Naive thymus-derived CD4-positive, alpha-beta T cell (primary cell): ENCODE measurements at regions of chr3 and their contacts with region 1.

Region 1: GRCh38 chr3:17023006-17023664 is 138.4 kb downstream of the PLCL2 start:
- DNase-seq: peak in 4 of 9 donors; percentile 5 to 61 (median 34)
- ATAC-seq: peak; percentile 87
- H3K4me3 ChIP-seq: no peak overlapping the region
- H3K4me3 Mint-ChIP-seq: peak overlapping the region in 7 of 10 donors; percentile 27 to 72 (median 49)
- H3K27ac ChIP-seq: no peak overlapping the region
- H3K27ac Mint-ChIP-seq: peak overlapping the region; percentile 34 to 95 (median 79)
- H3K4me1 ChIP-seq: peaks cover 15 to 31% of the 10 kb centered on the region in 2 donors
- H3K4me1 Mint-ChIP-seq: peaks cover 34 to 87% (median 76%) of the 10 kb centered on the region in 7 donors
- H3K27me3 ChIP-seq: no peaks in the 10 kb centered on the region
- H3K27me3 Mint-ChIP-seq: no peaks in the 10 kb centered on the region

Region 2: DNA sequence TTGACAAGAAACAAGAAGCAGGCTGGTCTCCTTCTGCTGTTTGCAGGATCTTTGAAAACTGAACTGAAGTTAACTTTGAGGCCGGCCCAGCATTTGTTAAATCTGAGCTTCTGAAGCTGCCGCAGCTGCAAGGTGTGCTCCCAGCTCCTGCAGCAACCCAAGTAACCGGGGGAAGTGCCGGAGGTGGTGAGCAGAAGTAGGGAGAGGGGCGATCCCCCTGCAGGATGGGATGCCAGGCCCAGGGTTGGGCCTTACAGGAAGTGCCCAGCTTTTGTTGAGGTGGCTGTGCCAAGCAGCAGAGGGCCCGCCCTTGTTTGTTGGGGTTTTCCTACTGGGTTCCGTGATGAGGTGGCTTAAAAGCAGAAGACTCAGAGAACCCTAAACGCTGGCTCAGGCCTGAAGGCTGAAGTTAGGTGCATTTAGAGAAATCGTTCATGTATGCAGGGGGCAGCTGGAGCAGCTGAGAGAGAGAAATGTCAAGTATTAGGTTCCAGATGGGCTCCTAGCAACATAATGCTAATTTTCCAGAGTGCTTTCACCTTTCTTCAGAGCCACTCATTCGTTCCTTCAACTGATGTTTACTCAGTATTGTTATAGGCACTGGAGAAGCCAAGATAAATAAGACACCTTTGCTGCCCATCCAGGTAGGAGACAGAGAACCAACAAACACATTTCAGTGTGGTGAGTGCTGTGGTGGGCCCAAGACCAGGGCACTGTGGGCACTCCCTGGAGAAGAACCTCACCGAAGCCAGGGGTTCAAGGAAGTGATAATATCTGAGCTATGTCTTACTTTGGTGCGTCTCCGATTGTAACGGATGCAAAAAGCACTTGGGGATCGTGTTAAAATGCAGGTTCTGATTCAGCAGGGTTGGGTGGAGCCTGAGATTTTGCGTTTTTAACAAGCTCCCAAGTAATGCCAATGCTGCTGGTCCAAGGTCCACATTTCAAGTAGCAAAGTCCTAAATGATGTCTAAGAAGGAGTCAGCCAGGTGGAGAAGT is 180.6 kb before region 1 on chr3:
- CTCF ChIA-PET with region 1: no interaction called
- POLR2A ChIA-PET with region 1: no interaction called
- intact Hi-C with region 1: loop called in 1 of 2 experiments (anchors 5 kb)
- DNase-seq: peak; percentile 49 to 85 (median 78)
- ATAC-seq: peak; percentile 95
- H3K4me3 ChIP-seq: peak overlapping the region; percentile 61
- H3K4me3 Mint-ChIP-seq: peak overlapping the region; percentile 78 to 93 (median 87)
- H3K27ac ChIP-seq: peak overlapping the region; percentile 76
- H3K27ac Mint-ChIP-seq: peak overlapping the region; percentile 92 to 99 (median 98)
- H3K4me1 ChIP-seq: peaks cover 49 to 51% of the 10 kb centered on the region in 2 donors
- H3K4me1 Mint-ChIP-seq: peaks cover 34 to 96% (median 90%) of the 10 kb centered on the region in 7 donors
- H3K27me3 ChIP-seq: no peaks in the 10 kb centered on the region
- H3K27me3 Mint-ChIP-seq: peaks cover 0 to 6% (median 0%) of the 10 kb centered on the region in 5 donors

Region 3: DNA sequence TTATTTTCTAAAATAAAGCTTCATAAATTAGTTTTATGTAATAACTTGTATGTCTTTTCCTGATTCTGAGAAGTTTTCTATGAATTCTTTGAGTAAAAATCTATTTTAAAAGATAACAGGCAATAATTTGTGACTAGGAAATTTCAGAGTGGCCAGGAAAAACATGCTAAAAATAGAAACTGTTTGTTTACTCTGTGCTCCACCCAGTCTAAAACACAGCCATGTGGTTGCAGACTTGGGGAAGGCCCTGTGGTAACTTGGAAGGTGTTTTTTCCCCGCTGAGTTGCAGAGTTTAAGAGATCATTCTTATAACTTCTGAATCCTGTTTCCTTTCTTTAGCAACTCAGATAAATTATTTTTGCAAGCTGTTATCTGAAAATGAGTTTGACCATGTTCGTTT is 116.5 kb before region 1 on chr3:
- CTCF ChIA-PET with region 1: no interaction called
- POLR2A ChIA-PET with region 1: no interaction called
- intact Hi-C with region 1: loop called in 1 of 2 experiments (anchors 5 kb)
- DNase-seq: peak in 1 of 9 donors; percentile 50
- ATAC-seq: peak; percentile 77
- H3K4me3 ChIP-seq: no peak overlapping the region
- H3K4me3 Mint-ChIP-seq: peak overlapping the region; percentile 22 to 68 (median 51)
- H3K27ac ChIP-seq: no peak overlapping the region
- H3K27ac Mint-ChIP-seq: peak overlapping the region in 7 of 9 donors; percentile 26 to 76 (median 59)
- H3K4me1 ChIP-seq: peaks cover 64% of the 10 kb centered on the region in 2 donors
- H3K4me1 Mint-ChIP-seq: peaks cover 65 to 93% (median 85%) of the 10 kb centered on the region in 7 donors
- H3K27me3 ChIP-seq: no peaks in the 10 kb centered on the region
- H3K27me3 Mint-ChIP-seq: no peaks in the 10 kb centered on the region

Region 4: GRCh38 chr3:16936233-16936632 is 86.9 kb before region 1 on chr3:
- CTCF ChIA-PET with region 1: interaction called, 3 read pairs
- POLR2A ChIA-PET with region 1: no interaction called
- intact Hi-C with region 1: loop called in 1 of 2 experiments (anchors 5 kb)
- DNase-seq: peak in 7 of 9 donors; percentile 29 to 65 (median 45)
- ATAC-seq: peak; percentile 74
- H3K4me3 ChIP-seq: peak overlapping the region; percentile 5
- H3K4me3 Mint-ChIP-seq: peak overlapping the region; percentile 27 to 77 (median 72)
- H3K27ac ChIP-seq: no peak overlapping the region
- H3K27ac Mint-ChIP-seq: peak overlapping the region in 7 of 9 donors; percentile 29 to 87 (median 61)
- H3K4me1 ChIP-seq: peaks cover 35 to 68% of the 10 kb centered on the region in 2 donors
- H3K4me1 Mint-ChIP-seq: peaks cover 61 to 100% (median 98%) of the 10 kb centered on the region in 7 donors
- H3K27me3 ChIP-seq: no peaks in the 10 kb centered on the region
- H3K27me3 Mint-ChIP-seq: no peaks in the 10 kb centered on the region

Region 5: GRCh38 chr3:17003456-17003855 is 19.7 kb before region 1 on chr3:
- CTCF ChIA-PET with region 1: no interaction called
- POLR2A ChIA-PET with region 1: no interaction called
- intact Hi-C with region 1: loop called in 1 of 2 experiments (anchors 2 kb)
- DNase-seq: no peak
- ATAC-seq: no peak
- H3K4me3 ChIP-seq: no peak overlapping the region
- H3K4me3 Mint-ChIP-seq: peak overlapping the region in 3 of 10 donors; percentile 3 to 52 (median 19)
- H3K27ac ChIP-seq: no peak overlapping the region
- H3K27ac Mint-ChIP-seq: peak overlapping the region in 1 of 9 donors; percentile 29
- H3K4me1 ChIP-seq: peaks cover 14 to 30% of the 10 kb centered on the region in 2 donors
- H3K4me1 Mint-ChIP-seq: peaks cover 33 to 94% (median 81%) of the 10 kb centered on the region in 7 donors
- H3K27me3 ChIP-seq: no peaks in the 10 kb centered on the region
- H3K27me3 Mint-ChIP-seq: no peaks in the 10 kb centered on the region

Region 6: GRCh38 chr3:17044855-17045254 is 21.7 kb after region 1 on chr3:
- CTCF ChIA-PET with region 1: no interaction called
- POLR2A ChIA-PET with region 1: interaction called, 3 read pairs
- intact Hi-C with region 1: loop called in 1 of 2 experiments (anchors 2 kb)
- DNase-seq: no peak
- ATAC-seq: no peak
- H3K4me3 ChIP-seq: no peak overlapping the region
- H3K4me3 Mint-ChIP-seq: no peak overlapping the region
- H3K27ac ChIP-seq: no peak overlapping the region
- H3K27ac Mint-ChIP-seq: peak overlapping the region in 2 of 9 donors; percentile 45 to 79
- H3K4me1 ChIP-seq: no peaks in the 10 kb centered on the region
- H3K4me1 Mint-ChIP-seq: peaks cover 10 to 43% (median 24%) of the 10 kb centered on the region in 7 donors
- H3K27me3 ChIP-seq: no peaks in the 10 kb centered on the region
- H3K27me3 Mint-ChIP-seq: no peaks in the 10 kb centered on the region